ENCODE measurements at regions of chr20 and their contacts with region 1.

Region 1: DNA sequence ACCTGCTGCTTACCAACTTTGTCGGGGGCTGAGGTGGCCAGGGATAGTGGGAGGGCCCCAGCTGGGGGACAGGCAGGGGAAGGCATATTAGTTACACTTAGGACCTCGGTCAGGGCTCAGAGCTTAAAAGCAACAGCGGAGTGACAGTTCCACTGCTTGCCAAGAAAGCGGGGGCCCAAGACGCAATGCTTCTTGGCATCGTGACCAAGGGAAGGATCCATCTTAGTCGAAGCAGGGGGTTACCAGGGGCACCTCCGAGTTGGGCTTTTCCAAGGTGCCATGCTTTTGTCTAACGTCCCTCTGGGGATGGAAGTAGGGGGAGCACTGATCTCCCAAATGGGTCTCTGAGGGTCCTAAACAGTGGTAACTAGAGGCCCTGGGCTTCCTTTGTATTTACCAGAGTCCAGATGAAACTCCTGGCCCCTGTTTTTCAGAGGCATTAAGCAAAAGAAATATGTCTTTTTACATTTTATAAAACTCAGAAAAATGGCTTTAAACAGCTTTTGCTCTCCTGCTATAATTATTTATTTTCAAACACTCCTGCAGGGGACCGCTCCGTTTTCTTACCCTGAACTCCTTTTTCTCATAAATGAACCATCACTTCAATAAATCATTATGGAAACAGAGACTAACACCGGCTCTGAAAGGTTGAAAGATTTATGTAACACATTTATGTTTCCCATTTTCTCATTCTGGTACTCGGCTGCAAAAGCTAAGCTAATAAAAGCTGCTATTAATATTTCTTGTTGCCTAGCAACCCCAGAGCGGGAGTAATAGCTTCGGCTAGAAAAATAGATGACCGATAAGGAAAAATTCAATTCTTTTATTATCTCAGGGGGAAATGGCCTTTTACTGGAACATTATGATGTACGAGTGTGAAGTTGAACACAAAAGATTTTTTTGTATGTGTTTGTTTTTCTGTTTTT is 100.4 kb downstream of the TOX2 start:
- DNase-seq: no peak
- H3K4me3 ChIP-seq: no peak overlapping the region
- H3K27ac ChIP-seq: no peak overlapping the region
- H3K4me1 ChIP-seq: no peaks in the 10 kb centered on the region
- H3K27me3 ChIP-seq: peaks cover 0 to 38% of the 10 kb centered on the region in 2 donors
- CTCF ChIP-seq: no peak
- POLR2A ChIP-seq: no peak

Region 2: GRCh38 chr20:43699941-43700565 is 315.0 kb before region 1 on chr20:
- intact Hi-C with region 1: no loop called
- DNase-seq: no peak
- H3K4me3 ChIP-seq: no peak overlapping the region
- H3K27ac ChIP-seq: no peak overlapping the region
- H3K4me1 ChIP-seq: no peaks in the 10 kb centered on the region
- H3K27me3 ChIP-seq: no peaks in the 10 kb centered on the region
- CTCF ChIP-seq: no peak
- POLR2A ChIP-seq: no peak

Region 3: DNA sequence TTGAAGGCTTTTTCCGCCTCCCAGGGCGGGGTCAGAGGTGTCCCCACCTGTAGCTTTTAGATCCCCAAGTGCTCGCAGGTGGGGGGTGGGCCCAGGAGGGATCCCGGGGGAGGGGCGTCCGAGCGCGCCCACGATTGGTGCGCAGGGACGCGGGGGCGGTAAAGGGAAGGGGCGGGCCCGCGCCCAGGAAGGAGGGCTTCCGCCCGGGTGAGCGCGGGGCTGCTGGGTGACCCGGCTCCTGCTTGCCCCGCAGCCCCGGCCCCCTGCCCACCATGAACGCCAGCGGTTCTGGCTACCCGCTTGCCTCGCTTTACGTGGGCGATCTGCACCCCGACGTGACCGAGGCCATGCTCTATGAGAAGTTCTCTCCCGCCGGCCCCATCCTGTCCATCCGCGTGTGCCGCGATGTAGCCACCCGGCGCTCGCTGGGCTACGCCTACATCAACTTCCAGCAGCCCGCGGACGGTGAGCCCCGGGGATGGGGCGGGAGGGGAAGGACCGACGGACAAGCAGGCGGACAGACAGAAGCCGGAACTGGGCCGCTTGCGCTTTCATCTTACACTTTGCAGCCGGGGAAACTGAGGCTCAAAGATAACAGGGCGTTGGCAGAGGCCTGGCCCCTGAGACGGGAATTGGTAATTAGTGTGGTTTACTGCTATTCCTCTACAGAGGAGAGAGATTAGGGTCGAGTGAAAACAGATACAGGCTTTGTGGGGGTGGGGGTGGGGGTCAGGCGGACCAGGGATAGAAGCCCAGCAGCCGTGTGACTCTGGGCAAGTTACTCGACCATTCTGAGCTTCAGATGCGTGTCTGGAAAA is 895.0 kb after region 1 on chr20 and contains the start of gene PABPC1L:
- intact Hi-C with region 1: loop called (anchors 5 kb)
- DNase-seq: peak in 1 of 2 donors; percentile 46
- H3K4me3 ChIP-seq: peak within 1 kb of the TSS; percentile 55 to 85 (median 80)
- H3K27ac ChIP-seq: peak within 1 kb of the TSS in 1 of 2 donors; percentile 25
- H3K4me1 ChIP-seq: peaks cover 0 to 3% of the 10 kb centered on the region in 2 donors
- H3K27me3 ChIP-seq: no peaks in the 10 kb centered on the region
- CTCF ChIP-seq: no peak
- POLR2A ChIP-seq: no peak
- total RNA-seq, gene PABPC1L: 6.9 to 55.3 (median 28.8) TPM

Measured in breast epithelium (tissue), 4 donors.